Activated T-helper 1 cell treated with anti-CD3 and anti-CD28 coated beads, Interleukin-12 subunit alpha, Interleukin-12 subunit beta, Interleukin-2, Interleukin-4 antibody, amounts not matched to agents 30 ng/mL and 10 ng/mL and 1 ng/mL, durations not matched to agents 14 hours and 24 hours and 36 hours (primary cell): ENCODE measurements at regions of chr11 and their contacts with region 1.

Region 1: DNA sequence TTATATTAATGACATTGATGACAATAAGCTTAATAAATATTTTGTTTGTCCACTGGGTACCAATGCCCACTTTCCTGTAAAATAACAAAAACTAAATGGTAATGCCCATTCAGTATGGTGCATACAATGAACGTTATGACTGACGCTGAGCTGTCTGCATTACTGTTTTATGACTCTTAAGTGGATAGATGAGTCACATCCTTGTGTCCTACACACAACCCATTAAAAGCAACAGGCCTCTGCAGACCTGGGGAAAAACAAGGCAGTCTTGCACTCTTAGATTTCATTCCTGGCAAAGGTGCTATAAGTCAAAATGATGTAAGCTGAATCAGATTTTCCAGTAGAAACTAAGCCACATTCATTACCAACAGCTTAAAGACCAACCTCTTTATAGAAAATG is 176.3 kb upstream of the TMEM45B start:
- DNase-seq: peak; percentile 24
- H3K4me3 Mint-ChIP-seq: peak overlapping the region; percentile 21
- H3K27ac Mint-ChIP-seq: peak overlapping the region; percentile 86
- H3K4me1 Mint-ChIP-seq: peaks cover 80% of the 10 kb centered on the region
- H3K27me3 Mint-ChIP-seq: no peaks in the 10 kb centered on the region

Region 2: GRCh38 chr11:128328955-128329551 is 1310.2 kb before region 1 on chr11:
- intact Hi-C with region 1: loop called (anchors 5 kb)
- DNase-seq: no peak
- H3K4me3 Mint-ChIP-seq: peak overlapping the region; percentile 45
- H3K27ac Mint-ChIP-seq: peak overlapping the region; percentile 99
- H3K4me1 Mint-ChIP-seq: peaks cover 85% of the 10 kb centered on the region
- H3K27me3 Mint-ChIP-seq: no peaks in the 10 kb centered on the region

Region 3: DNA sequence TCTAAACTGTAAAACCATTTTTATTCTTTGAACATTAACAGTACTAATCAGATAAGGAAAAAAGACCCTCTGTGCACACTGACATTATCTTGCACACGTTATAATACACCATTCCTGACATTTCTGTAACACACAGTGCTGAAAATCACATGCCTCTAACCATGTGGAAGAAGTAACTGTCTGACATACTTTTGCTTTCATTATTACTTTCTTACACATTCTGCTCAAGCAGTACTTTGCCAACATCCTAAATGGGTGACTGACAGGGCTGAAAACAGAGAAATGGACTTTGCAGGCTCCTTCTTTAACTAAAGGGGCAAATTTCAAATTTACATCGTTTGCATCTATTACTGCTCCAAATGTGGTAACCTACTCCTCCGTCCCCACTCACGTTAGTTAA is 673.8 kb before region 1 on chr11:
- intact Hi-C with region 1: loop called (anchors 5 kb)
- DNase-seq: peak; percentile 6
- H3K4me3 Mint-ChIP-seq: peak overlapping the region; percentile 41
- H3K27ac Mint-ChIP-seq: peak overlapping the region; percentile 53
- H3K4me1 Mint-ChIP-seq: peaks cover 66% of the 10 kb centered on the region
- H3K27me3 Mint-ChIP-seq: no peaks in the 10 kb centered on the region

Region 4: DNA sequence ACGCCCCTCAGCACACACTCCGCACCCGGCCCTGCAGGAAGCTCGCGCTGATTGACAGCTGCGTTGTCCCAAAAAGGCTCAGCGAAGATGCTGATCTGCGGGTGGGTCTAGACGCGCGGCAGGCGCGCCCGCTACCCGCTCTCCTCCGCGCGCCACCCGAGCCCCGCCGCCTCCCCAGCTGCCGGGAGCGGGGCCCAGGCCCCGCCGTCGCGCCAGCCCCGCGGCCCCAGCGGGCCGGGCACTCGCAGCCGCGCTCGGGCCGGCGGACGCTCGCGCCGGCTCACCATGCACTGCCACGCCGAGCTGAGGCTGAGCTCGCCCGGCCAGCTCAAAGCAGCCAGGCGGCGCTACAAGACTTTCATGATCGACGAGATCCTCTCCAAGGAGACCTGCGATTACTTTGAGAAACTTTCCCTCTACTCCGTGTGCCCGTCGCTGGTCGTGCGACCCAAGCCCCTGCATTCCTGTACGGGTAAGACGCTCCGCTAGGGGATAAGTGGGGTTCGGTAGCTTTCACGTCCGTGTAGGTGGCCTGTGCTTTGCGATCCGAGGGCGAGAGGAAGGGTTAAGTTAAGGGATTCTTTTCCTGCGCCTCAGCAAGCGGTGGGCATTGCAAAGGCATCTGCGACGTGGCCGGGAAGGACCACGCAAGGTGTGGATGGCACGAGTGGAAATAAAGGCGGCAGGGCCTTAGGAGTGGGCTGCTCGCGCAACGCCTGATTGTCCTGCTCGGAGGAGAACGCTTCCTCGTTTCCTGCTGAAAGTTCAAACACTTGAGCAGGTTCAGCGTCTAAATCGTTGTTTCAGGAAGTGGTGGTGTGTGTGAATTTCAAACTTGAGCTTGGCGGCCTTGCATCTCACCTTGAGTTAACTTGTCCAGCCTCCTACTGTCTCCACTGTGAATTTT is 263.3 kb before region 1 on chr11 and contains the start of gene BARX2:
- intact Hi-C with region 1: loop called (anchors 1 kb)
- DNase-seq: peak; percentile 21
- H3K4me3 Mint-ChIP-seq: peak within 1 kb of the TSS; percentile 88
- H3K27ac Mint-ChIP-seq: peak within 1 kb of the TSS; percentile 77
- H3K4me1 Mint-ChIP-seq: peaks cover 38% of the 10 kb centered on the region
- H3K27me3 Mint-ChIP-seq: peaks cover 63% of the 10 kb centered on the region
- total RNA-seq, gene BARX2: 8.8 and 9.1 TPM in 2 replicates

Region 5: DNA sequence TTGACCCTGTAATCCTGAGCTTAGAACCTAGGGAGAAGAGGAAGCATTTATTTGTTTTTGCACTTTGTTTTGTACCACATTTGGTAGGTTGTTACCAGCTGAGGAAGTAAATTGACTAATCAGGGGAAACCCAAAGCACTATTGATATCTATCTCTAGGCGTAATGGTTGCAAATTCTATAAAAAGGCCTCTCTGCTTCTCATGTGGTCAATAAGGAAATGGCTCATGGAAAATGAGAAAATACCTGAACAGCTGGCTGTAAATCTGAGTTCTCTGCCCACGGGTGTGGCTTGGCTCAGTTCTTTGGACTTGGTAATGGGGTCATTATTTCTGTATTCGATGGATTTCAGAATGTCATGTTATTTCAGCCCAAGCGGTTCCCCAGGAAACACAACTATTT is 221.3 kb before region 1 on chr11:
- intact Hi-C with region 1: loop called (anchors 1 kb)
- DNase-seq: no peak
- H3K4me3 Mint-ChIP-seq: peak overlapping the region; percentile 40
- H3K27ac Mint-ChIP-seq: peak overlapping the region; percentile 81
- H3K4me1 Mint-ChIP-seq: peaks cover 29% of the 10 kb centered on the region
- H3K27me3 Mint-ChIP-seq: no peaks in the 10 kb centered on the region

Region 6: DNA sequence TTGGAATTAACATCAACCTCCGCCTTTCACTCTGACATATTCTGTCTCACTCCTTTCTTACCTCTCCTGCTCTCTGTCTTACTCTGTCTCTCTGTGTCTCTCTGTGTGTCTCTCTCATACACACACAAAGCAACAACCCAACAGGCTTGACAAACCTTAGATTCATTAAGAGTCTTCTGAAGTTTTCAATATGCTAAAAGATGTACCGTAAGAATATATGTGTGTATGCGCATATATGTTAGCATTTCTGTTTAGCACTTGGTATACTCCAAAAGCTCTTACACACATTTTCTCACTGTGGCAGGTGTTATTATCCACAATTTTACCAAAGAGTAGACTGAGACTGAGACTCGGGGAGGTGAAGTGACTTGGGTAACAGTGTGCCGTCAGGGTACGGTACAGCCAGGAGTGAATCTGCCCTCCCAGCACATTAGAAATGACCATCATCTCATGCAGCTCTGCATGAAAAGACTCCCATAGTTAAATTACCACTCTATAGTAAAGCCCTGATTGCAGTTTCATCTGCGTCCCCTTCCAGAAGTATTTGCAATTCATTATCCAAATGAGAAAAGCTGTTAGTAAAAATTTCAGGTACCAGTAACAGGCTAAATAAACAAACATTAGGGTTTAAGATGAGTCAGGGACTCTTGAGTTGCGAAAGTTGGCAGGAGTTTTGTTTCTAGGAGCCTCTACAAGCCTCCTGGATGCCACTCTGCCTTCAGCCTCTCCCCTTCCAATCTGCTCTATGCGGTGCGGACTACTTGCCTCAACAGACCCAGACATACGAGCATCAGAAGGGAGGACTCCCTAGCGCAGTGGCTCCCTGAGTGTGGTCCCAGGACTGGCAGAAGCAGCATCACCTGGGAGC is 18.8 kb before region 1 on chr11:
- intact Hi-C with region 1: loop called (anchors 2 kb)
- DNase-seq: no peak
- H3K4me3 Mint-ChIP-seq: no peak overlapping the region
- H3K27ac Mint-ChIP-seq: no peak overlapping the region
- H3K4me1 Mint-ChIP-seq: no peaks in the 10 kb centered on the region
- H3K27me3 Mint-ChIP-seq: peaks cover 3% of the 10 kb centered on the region

Region 7: DNA sequence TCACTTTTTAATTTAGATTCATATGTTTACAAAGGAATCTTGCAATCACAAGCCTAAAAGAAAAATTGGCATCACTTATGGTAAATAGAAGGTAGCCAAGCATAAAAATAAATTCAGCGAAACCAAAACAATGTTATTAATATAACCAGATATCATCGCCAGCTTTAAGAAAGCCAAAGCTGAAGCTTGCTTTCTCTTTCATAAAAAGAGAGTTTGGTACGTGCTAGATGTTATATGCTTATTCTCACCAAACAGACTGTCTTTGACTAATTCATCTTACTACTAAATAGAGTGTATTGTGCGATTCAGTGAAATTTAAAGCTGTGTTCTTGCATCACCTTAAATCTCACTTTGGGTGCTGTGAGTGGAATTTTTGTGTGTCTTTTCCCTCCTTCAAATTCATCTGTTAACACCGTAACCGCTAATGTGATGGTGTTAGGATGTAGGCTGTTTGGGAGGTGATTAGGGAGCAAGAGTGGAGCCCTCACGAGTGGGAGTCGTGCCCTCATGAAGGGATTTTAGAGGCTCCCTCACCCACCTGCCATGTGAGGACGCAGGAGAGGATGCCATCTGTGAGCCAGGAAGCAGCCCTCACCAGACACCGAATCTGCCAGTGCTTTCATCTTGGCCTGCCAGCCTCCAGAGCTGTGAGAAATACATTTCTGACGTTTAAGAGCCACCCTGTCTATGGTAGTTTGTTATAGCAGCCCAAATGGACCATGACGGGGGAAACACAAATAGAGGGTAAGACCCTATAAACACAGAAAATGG is 42.2 kb after region 1 on chr11:
- intact Hi-C with region 1: no loop called
- DNase-seq: no peak
- H3K4me3 Mint-ChIP-seq: no peak overlapping the region
- H3K27ac Mint-ChIP-seq: no peak overlapping the region
- H3K4me1 Mint-ChIP-seq: no peaks in the 10 kb centered on the region
- H3K27me3 Mint-ChIP-seq: no peaks in the 10 kb centered on the region

Region 8: DNA sequence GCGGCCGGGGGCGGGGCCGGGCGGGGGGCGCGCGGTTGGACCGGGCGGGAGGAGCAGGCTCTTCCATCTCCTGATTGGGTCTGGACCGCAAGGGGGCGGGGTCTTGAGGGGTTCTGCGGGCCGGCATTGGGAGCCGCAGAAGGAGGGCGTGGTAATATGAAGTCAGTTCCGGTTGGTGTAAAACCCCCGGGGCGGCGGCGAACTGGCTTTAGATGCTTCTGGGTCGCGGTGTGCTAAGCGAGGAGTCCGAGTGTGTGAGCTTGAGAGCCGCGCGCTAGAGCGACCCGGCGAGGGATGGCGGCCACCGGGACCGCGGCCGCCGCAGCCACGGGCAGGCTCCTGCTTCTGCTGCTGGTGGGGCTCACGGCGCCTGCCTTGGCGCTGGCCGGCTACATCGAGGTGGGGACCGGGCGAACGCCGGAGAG is 430.4 kb after region 1 on chr11 and contains the start of gene APLP2:
- intact Hi-C with region 1: loop called (anchors 5 kb)
- DNase-seq: peak; percentile 96
- H3K4me3 Mint-ChIP-seq: peak within 1 kb of the TSS; percentile 94
- H3K27ac Mint-ChIP-seq: peak within 1 kb of the TSS; percentile 89
- H3K4me1 Mint-ChIP-seq: peaks cover 17% of the 10 kb centered on the region
- H3K27me3 Mint-ChIP-seq: peaks cover 25% of the 10 kb centered on the region
- total RNA-seq, gene APLP2: 47.0 and 47.8 TPM in 2 replicates